ENCODE measurements at regions of chr12 and their contacts with region 1.

Region 1: DNA sequence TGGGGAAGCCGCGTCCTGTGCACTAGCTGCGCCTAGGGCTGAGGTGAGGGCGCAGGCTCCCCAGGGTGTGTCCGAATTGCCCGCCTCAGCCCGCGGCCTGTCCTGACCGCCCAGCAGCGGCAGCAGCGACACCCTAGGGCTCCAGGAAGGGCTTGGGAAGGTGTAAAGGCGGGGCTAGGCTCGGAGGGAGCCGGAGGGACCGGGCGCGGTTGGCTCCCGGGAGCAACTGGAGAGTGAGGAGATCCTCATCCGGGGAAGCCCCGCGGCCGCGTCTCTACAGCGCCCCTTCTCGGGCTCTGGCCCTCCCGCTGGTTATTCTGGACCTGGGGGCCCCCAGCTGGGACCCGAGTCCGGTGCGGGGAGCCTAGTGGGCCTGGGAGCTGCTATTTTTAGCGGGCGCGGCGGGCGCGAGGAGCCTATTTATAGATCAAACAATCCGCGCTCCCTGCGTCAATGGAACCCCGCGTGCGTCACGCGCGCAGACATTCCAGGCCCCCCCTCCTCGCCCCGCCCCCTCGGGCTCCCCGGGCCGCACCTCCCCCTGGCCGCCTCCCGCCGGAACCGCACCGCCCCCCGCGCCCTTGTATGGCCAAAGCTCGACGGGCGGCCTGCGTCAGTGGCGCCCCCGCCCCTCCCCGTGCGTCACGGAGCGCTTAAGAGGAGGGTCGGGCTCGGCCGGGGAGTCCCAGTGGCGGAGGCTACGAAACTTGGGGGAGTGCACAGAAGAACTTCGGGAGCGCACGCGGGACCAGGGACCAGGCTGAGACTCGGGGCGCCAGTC is at the start of gene NR4A1:
- DNase-seq: peak; percentile 92 to 99 (median 97)
- H3K4me3 ChIP-seq: peak within 1 kb of the TSS; percentile 60 to 87 (median 63)
- H3K4me3 Mint-ChIP-seq: peak within 1 kb of the TSS; percentile 94 to 99
- H3K27ac ChIP-seq: peak within 1 kb of the TSS; percentile 85 to 94
- H3K27ac Mint-ChIP-seq: peak within 1 kb of the TSS; percentile 94 to 97 (median 96)
- H3K4me1 ChIP-seq: peaks cover 36 to 72% of the 10 kb centered on the region in 2 donors
- H3K4me1 Mint-ChIP-seq: peaks cover 43% of the 10 kb centered on the region
- H3K27me3 ChIP-seq: peaks cover 0 to 24% of the 10 kb centered on the region in 2 donors
- H3K27me3 Mint-ChIP-seq: peaks cover 28 to 43% (median 39%) of the 10 kb centered on the region in 3 donors
- CTCF ChIP-seq: no peak
- polyA plus RNA-seq, gene NR4A1: 10.1 to 1,297 (median 41.4) TPM

Region 2: GRCh38 chr12:52069327-52070184 is 18.6 kb after region 1 on chr12 and contains the start of gene ATG101:
- intact Hi-C with region 1: loop called (anchors 1 to 2 kb)
- DNase-seq: peak; percentile 93 to 94 (median 93)
- H3K4me3 ChIP-seq: peak within 1 kb of the TSS; percentile 63 to 93 (median 89)
- H3K4me3 Mint-ChIP-seq: peak within 1 kb of the TSS; percentile 95 to 96
- H3K27ac ChIP-seq: peak within 1 kb of the TSS; percentile 52 to 92
- H3K27ac Mint-ChIP-seq: peak within 1 kb of the TSS; percentile 92 to 100 (median 99)
- H3K4me1 ChIP-seq: peaks cover 20 to 21% of the 10 kb centered on the region in 2 donors
- H3K4me1 Mint-ChIP-seq: peaks cover 50% of the 10 kb centered on the region
- H3K27me3 ChIP-seq: peaks cover 0 to 5% of the 10 kb centered on the region in 2 donors
- H3K27me3 Mint-ChIP-seq: peaks cover 2 to 20% (median 20%) of the 10 kb centered on the region in 3 donors
- CTCF ChIP-seq: peak; percentile 65
- polyA plus RNA-seq, gene ATG101: 20.5 to 120 (median 26.4) TPM

Measured in CD14-positive monocyte (primary cell).